A673 (cell line): ENCODE measurements at regions of chr13 and their contacts with region 1.

Region 1: DNA sequence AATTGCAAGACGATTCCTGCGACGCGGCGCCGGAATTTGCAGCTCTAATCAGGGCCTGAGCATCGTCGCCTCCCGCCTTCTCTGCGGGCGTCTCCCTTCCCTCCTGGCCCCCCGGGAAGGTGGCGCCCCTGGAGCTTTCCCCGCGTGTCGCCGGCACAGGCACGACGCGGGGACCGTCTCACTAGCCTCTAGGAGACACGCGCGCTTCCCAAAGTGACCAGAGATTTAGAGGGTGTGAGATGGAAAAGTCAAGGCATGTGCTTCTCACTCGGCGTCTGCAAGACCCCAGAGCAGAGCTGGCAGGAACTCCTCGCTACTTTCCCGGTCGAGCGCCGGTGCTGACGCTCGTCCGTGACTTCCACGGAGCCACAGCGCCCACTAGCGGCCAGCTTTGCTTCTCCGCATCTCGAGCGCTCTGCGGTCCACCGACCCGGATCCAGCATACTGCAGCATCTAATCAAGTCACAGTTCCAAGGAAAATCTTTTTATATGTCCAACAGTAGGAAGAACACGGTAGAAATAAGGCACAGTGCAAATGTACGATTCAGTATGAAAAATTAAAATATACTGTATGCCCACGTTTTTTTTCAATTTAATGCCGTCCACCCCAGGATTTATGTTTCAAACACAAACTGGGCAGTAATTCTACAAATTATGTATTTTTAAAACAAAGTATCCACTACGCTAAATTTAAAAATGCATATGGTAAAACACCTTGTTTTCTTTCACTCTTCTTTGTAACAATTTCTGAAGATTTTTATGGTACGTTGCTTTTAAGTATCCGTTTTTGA is 977 bp upstream of the EFNB2 start:
- DNase-seq: peak; percentile 89
- H3K4me3 ChIP-seq: peak overlapping the region; percentile 51
- H3K27ac ChIP-seq: no peak overlapping the region
- H3K4me1 ChIP-seq: peaks cover 4% of the 10 kb centered on the region
- H3K27me3 ChIP-seq: peaks cover 35% of the 10 kb centered on the region
- CTCF ChIP-seq: peak; percentile 94

Region 2: GRCh38 chr13:104773775-104774174 is 1762.7 kb before region 1 on chr13:
- CTCF ChIA-PET with region 1: interaction called, 3 read pairs
- POLR2A ChIA-PET with region 1: no interaction called
- intact Hi-C with region 1: loop called (anchors 10 kb)
- DNase-seq: peak; percentile 51
- H3K4me3 ChIP-seq: no peak overlapping the region
- H3K27ac ChIP-seq: no peak overlapping the region
- H3K4me1 ChIP-seq: no peaks in the 10 kb centered on the region
- H3K27me3 ChIP-seq: no peaks in the 10 kb centered on the region
- CTCF ChIP-seq: peak; percentile 64

Region 3: GRCh38 chr13:105991622-105992277 is 544.7 kb before region 1 on chr13:
- CTCF ChIA-PET with region 1: no interaction called
- POLR2A ChIA-PET with region 1: no interaction called
- intact Hi-C with region 1: loop called (anchors 10 kb)
- DNase-seq: no peak
- H3K4me3 ChIP-seq: no peak overlapping the region
- H3K27ac ChIP-seq: no peak overlapping the region
- H3K4me1 ChIP-seq: no peaks in the 10 kb centered on the region
- H3K27me3 ChIP-seq: no peaks in the 10 kb centered on the region
- CTCF ChIP-seq: no peak

Region 4: DNA sequence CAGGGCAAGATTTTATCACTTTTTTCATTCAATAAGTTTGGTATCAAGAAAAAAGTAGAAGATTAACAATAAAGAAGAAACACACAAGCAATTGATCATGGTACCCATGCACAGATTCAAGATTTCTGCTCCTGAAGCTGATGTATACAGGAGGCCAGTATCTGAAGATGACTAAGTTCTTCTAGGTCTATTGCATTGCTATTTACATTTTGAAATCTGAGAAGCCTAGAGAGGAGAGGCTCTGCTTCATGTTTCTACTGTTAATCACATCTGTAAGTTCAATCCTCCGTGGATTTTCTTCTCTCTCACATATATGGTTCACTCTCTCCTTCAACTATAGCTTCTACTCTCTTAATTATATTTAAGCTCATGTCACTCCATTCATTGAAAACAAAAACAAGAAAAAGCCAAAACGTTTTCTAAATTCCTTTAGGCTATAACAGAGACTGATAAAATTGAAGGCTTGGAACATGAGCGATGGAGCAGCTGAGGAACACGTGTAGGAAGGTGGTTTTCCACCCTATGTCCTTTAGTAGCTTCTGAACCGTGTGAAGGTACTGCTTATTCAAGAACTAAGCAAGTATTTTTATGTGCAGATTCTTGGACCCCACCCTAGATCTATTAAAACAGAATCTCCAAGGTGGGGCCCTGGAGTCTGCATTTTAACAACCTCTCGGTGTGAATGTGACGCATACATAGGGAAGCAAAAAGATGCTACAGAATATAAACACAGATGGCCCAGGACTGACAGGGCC is 199.2 kb before region 1 on chr13:
- CTCF ChIA-PET with region 1: no interaction called
- POLR2A ChIA-PET with region 1: no interaction called
- intact Hi-C with region 1: no loop called
- DNase-seq: no peak
- H3K4me3 ChIP-seq: no peak overlapping the region
- H3K27ac ChIP-seq: no peak overlapping the region
- H3K4me1 ChIP-seq: no peaks in the 10 kb centered on the region
- H3K27me3 ChIP-seq: no peaks in the 10 kb centered on the region
- CTCF ChIP-seq: no peak

Region 5: GRCh38 chr13:106619688-106620555 is 83.5 kb after region 1 on chr13:
- CTCF ChIA-PET with region 1: interaction called, 33 read pairs
- POLR2A ChIA-PET with region 1: no interaction called
- intact Hi-C with region 1: no loop called
- DNase-seq: peak; percentile 78
- H3K4me3 ChIP-seq: no peak overlapping the region
- H3K27ac ChIP-seq: no peak overlapping the region
- H3K4me1 ChIP-seq: no peaks in the 10 kb centered on the region
- H3K27me3 ChIP-seq: peaks cover 47% of the 10 kb centered on the region
- CTCF ChIP-seq: peak; percentile 82

Region 6: DNA sequence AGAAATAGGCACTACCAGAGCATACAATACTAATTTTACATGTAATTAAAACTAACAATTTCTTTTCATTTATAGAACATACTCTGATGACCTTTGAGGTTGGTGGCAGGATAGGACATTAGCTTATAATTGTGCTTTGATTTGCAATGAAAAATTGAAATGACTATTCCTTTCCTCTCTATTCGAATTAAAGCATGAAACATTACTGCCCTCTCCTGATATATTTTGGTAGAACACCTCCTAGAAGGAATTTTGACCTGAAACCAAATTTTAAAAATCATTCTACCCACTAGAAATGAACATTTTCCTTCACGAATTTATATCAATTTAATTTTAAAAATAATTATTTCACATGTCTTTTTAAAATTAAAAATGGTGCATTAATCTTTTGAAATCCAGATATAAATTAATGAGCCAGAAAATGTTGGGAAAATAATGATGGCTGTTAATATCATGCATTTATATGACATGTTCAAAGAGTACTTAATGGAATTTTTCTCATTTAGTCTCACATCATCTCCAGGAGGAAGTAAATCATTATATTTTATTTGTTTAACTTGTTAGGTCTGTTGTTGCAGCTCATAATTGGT is 587.8 kb after region 1 on chr13:
- CTCF ChIA-PET with region 1: no interaction called
- POLR2A ChIA-PET with region 1: no interaction called
- intact Hi-C with region 1: loop called (anchors 10 kb)
- DNase-seq: peak; percentile 22
- H3K4me3 ChIP-seq: no peak overlapping the region
- H3K27ac ChIP-seq: no peak overlapping the region
- H3K4me1 ChIP-seq: no peaks in the 10 kb centered on the region
- H3K27me3 ChIP-seq: no peaks in the 10 kb centered on the region
- CTCF ChIP-seq: peak; percentile 60